Left ventricle myocardium superior (tissue), 1 donor: ENCODE measurements at regions of chr11 and their contacts with region 1.

Region 1: GRCh38 chr11:106415510-106415909 is 338.0 kb downstream of the AASDHPPT start:
- DNase-seq: no peak
- ATAC-seq: no peak

Region 2: DNA sequence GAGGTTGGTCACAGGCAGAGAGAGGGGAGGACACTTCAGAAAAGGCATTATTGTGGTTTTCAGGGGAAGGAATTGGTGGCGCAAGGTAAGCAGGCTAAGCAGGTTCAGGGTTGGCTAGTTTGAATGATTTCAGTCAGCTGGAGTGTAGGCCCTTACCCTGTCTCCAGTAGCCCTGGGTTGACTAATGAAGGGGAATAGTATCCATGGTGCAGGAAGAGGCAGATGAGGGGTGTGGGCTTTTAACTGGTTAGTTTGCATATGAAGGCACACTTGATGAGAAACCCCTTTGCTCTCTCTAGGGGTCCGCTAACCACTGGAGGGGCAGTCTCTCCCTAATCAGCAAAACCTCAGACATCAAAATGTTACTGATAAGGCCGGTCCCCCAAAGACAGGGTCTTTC is 88.4 kb before region 1 on chr11:
- intact Hi-C with region 1: no loop called
- DNase-seq: no peak
- ATAC-seq: no peak

Region 3: GRCh38 chr11:106473089-106473722 is 57.7 kb after region 1 on chr11:
- intact Hi-C with region 1: loop called (anchors 10 kb)
- DNase-seq: no peak
- ATAC-seq: no peak